ENCODE measurements at regions of chr16 and their contacts with region 1.

Region 1: DNA sequence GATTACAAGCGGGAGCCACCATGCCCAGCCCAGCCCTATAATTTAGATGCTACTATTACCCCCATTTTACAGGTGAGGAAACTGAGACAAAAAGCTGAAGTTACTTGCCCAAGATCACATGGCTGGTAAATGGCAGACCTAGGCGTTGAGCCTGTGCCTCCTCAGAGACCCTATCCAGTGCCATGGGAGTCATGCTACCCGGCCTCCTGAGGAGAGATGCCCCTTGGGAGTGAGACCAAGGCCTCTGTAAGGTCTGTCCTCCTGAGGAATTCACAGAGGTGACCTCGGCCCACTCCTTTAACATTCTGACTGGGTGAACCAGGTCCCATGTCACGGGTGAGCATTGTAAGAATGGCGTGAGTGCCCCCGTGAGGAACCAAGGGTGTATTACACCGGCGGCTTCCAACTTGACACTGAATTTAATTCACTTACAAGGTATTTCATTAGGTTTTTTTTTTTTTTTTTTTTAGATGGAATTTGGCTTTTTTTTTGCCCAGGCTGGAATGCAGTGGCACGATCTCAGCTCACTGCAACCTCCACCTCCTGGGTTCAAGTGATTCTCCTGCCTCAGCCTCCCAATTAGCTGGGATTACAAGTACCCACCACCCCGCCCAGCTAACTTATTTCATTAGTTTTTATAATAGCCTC is 95.7 kb downstream of the ABCC6 start:
- DNase-seq: peak; percentile 42
- H3K4me3 ChIP-seq: no peak overlapping the region
- H3K27ac ChIP-seq: no peak overlapping the region
- H3K4me1 ChIP-seq: no peaks in the 10 kb centered on the region
- H3K27me3 ChIP-seq: no peaks in the 10 kb centered on the region
- CTCF ChIP-seq: peak; percentile 77 to 79

Region 2: GRCh38 chr16:15704545-15704987 is 423.0 kb before region 1 on chr16:
- CTCF ChIA-PET with region 1: no interaction called
- dilution Hi-C with region 1: no loop called
- in situ Hi-C with region 1: no loop called
- intact Hi-C with region 1: loop called (anchors 10 kb)
- DNase-seq: peak; percentile 29
- H3K4me3 ChIP-seq: no peak overlapping the region
- H3K27ac ChIP-seq: no peak overlapping the region
- H3K4me1 ChIP-seq: no peaks in the 10 kb centered on the region
- H3K27me3 ChIP-seq: no peaks in the 10 kb centered on the region
- CTCF ChIP-seq: peak; percentile 74 to 82

Region 3: DNA sequence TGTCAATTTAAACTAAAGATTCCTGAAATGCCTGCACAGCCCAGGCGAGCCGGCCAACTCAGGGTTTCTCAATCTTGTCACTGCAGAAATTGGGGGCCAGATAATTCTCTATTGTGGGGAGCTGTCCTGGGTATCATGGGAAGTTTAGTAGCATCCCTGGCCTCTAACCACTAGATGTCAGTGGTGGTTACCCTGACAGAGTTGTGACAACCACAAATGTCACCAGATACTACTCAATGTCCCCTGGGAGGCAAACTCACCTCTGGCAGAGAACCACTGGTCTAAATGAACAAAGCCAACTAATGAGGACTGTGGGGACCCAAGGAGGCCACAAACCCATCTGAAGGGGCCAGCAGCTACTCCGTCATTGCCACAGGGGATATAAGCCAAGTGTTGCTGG is 361.7 kb before region 1 on chr16:
- CTCF ChIA-PET with region 1: no interaction called
- dilution Hi-C with region 1: no loop called
- in situ Hi-C with region 1: no loop called
- intact Hi-C with region 1: loop called (anchors 1 kb)
- DNase-seq: peak; percentile 24
- H3K4me3 ChIP-seq: no peak overlapping the region
- H3K27ac ChIP-seq: no peak overlapping the region
- H3K4me1 ChIP-seq: no peaks in the 10 kb centered on the region
- H3K27me3 ChIP-seq: peaks cover 2% of the 10 kb centered on the region
- CTCF ChIP-seq: peak; percentile 59 to 76

Region 4: DNA sequence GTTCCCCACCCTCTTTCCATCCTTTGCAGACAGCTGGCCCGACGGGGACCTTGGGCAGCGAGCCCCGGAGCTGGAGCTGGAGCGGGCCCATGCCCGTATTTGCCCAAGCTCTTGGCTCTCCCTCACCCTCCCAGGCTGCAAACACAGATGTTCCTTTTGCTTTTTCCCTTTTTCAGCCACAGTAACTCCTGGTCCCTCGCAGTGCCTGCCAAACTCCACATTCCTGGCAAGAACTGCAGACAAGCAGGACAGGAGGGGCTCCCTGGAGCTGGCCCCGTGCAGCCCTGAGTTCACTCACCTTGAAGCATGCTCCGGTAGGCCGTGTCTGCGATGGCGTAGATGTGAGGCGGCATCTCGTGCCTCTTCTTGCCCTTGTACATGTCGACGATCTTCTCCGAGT is 304.6 kb before region 1 on chr16:
- CTCF ChIA-PET with region 1: no interaction called
- dilution Hi-C with region 1: no loop called
- in situ Hi-C with region 1: no loop called
- intact Hi-C with region 1: loop called (anchors 1 kb)
- DNase-seq: no peak
- H3K4me3 ChIP-seq: no peak overlapping the region
- H3K27ac ChIP-seq: no peak overlapping the region
- H3K4me1 ChIP-seq: no peaks in the 10 kb centered on the region
- H3K27me3 ChIP-seq: no peaks in the 10 kb centered on the region
- CTCF ChIP-seq: no peak

Region 5: GRCh38 chr16:16109453-16110108 is 18.0 kb before region 1 on chr16:
- CTCF ChIA-PET with region 1: no interaction called
- dilution Hi-C with region 1: no loop called
- in situ Hi-C with region 1: no loop called
- intact Hi-C with region 1: no loop called
- DNase-seq: no peak
- H3K4me3 ChIP-seq: no peak overlapping the region
- H3K27ac ChIP-seq: no peak overlapping the region
- H3K4me1 ChIP-seq: no peaks in the 10 kb centered on the region
- H3K27me3 ChIP-seq: no peaks in the 10 kb centered on the region
- CTCF ChIP-seq: no peak

Region 6: GRCh38 chr16:16163571-16163970 is 36.0 kb after region 1 on chr16:
- CTCF ChIA-PET with region 1: no interaction called
- dilution Hi-C with region 1: no loop called
- in situ Hi-C with region 1: no loop called
- intact Hi-C with region 1: no loop called
- DNase-seq: no peak
- H3K4me3 ChIP-seq: no peak overlapping the region
- H3K27ac ChIP-seq: no peak overlapping the region
- H3K4me1 ChIP-seq: no peaks in the 10 kb centered on the region
- H3K27me3 ChIP-seq: no peaks in the 10 kb centered on the region
- CTCF ChIP-seq: no peak

Region 7: GRCh38 chr16:16191493-16192167 is 64.0 kb after region 1 on chr16:
- CTCF ChIA-PET with region 1: no interaction called
- dilution Hi-C with region 1: no loop called
- in situ Hi-C with region 1: no loop called
- intact Hi-C with region 1: loop called (anchors 1 kb)
- DNase-seq: no peak
- H3K4me3 ChIP-seq: no peak overlapping the region
- H3K27ac ChIP-seq: no peak overlapping the region
- H3K4me1 ChIP-seq: no peaks in the 10 kb centered on the region
- H3K27me3 ChIP-seq: no peaks in the 10 kb centered on the region
- CTCF ChIP-seq: no peak